PC-3 (cell line): ENCODE measurements at regions of chr15 and their contacts with region 1.

Region 1: GRCh38 chr15:34271493-34271892 is 46.7 kb downstream of the EMC4 start:
- DNase-seq: peak; percentile 80
- ATAC-seq: peak; percentile 46
- H3K4me3 ChIP-seq: no peak overlapping the region
- H3K27ac ChIP-seq: peak overlapping the region; percentile 74
- H3K4me1 ChIP-seq: peaks cover 50% of the 10 kb centered on the region
- H3K27me3 ChIP-seq: no peaks in the 10 kb centered on the region
- CTCF ChIP-seq: no peak

Region 2: DNA sequence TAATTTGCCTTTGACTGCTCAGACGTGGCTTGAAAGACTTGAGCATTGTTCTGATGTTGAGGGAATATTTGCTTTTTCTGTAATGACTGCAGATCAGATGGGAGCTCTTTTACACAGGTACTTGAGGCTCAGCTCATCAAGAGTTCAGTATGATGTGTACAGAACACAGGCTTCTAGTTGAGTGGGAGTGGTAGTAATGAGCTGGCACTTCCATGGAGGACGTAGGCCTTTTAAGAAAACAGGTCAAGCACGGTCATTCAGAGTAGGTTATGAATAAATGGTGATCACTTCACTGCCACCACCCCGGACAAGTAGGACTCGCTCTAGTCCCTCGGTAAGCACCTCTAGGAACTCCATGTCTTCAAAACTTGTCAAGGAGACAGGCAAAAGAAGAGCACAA is 37.9 kb before region 1 on chr15:
- CTCF ChIA-PET with region 1: no interaction called
- POLR2A ChIA-PET with region 1: no interaction called
- intact Hi-C with region 1: loop called (anchors 5 kb)
- DNase-seq: no peak
- ATAC-seq: no peak
- H3K4me3 ChIP-seq: no peak overlapping the region
- H3K27ac ChIP-seq: peak overlapping the region; percentile 72; the same call in 1 of the 2 replicates
- H3K4me1 ChIP-seq: peaks cover 19% of the 10 kb centered on the region
- H3K27me3 ChIP-seq: no peaks in the 10 kb centered on the region
- CTCF ChIP-seq: no peak

Region 3: GRCh38 chr15:34297059-34297458 is 25.6 kb after region 1 on chr15:
- CTCF ChIA-PET with region 1: no interaction called
- POLR2A ChIA-PET with region 1: no interaction called
- intact Hi-C with region 1: loop called (anchors 1 kb)
- DNase-seq: peak; percentile 62
- ATAC-seq: peak; percentile 88
- H3K4me3 ChIP-seq: no peak overlapping the region
- H3K27ac ChIP-seq: peak overlapping the region; percentile 81
- H3K4me1 ChIP-seq: peaks cover 30% of the 10 kb centered on the region
- H3K27me3 ChIP-seq: no peaks in the 10 kb centered on the region
- CTCF ChIP-seq: no peak

Region 4: GRCh38 chr15:34337557-34338306 is 66.2 kb after region 1 on chr15 and contains the start of gene SLC12A6:
- CTCF ChIA-PET with region 1: interaction called, 3 read pairs
- POLR2A ChIA-PET with region 1: no interaction called
- intact Hi-C with region 1: loop called (anchors 1 kb)
- DNase-seq: peak; percentile 95
- ATAC-seq: peak; percentile 82
- H3K4me3 ChIP-seq: peak within 1 kb of the TSS; percentile 90
- H3K27ac ChIP-seq: peak within 1 kb of the TSS; percentile 93
- H3K4me1 ChIP-seq: peaks cover 68% of the 10 kb centered on the region
- H3K27me3 ChIP-seq: no peaks in the 10 kb centered on the region
- CTCF ChIP-seq: no peak
- total RNA-seq, gene SLC12A6: 22.9 TPM in 2 replicates

Region 5: DNA sequence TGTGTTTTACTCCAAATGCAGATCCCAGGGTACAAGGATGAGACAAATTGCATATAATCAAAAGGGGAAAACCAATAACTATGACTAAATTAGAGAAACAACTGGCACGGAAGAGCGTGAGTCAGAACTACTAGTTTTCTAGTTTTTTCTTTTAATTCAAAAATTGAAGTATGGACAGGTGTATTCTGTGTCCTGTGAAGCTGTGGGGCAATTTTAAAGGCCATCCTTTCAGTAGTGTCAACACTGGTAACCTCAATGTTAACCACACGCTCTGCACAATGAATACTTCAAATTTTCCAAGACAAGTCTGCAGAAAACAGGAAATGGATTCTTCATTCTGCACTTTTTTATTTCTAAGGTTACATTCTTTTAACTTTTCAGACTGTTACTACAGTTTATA is 198.6 kb after region 1 on chr15:
- CTCF ChIA-PET with region 1: no interaction called
- POLR2A ChIA-PET with region 1: no interaction called
- intact Hi-C with region 1: no loop called
- DNase-seq: no peak
- ATAC-seq: no peak
- H3K4me3 ChIP-seq: no peak overlapping the region
- H3K27ac ChIP-seq: no peak overlapping the region
- H3K4me1 ChIP-seq: no peaks in the 10 kb centered on the region
- H3K27me3 ChIP-seq: peaks cover 17% of the 10 kb centered on the region; the same call in 1 of the 2 replicates
- CTCF ChIP-seq: no peak